ENCODE measurements at regions of chr17 and their contacts with region 1.

Region 1: GRCh38 chr17:19248928-19249574 is 11.9 kb downstream of the EPN2 start:
- DNase-seq: peak; percentile 42
- H3K4me3 ChIP-seq: no peak overlapping the region
- CTCF ChIP-seq: no peak

Region 2: DNA sequence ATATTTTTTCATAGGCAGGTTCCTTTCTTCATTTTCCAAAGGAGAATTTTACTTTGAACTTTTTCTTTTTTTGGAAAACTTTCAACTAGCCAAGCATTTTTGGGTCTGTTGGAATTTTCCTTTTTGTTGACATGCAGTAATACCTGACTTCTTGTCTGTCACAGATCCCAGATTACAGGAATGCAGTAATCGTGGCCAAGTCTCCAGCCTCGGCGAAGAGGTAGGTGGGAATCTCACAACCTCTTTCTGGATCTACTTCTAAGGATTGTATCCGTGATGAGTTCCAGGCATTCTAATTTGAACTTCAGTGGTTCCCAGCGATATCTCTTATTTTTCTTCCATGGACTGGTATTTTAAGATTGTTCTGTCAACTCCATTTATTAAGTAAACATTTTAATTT is 359.4 kb before region 1 on chr17:
- CTCF ChIA-PET with region 1: no interaction called
- POLR2A ChIA-PET with region 1: no interaction called
- DNase-seq: no peak
- H3K4me3 ChIP-seq: no peak overlapping the region
- CTCF ChIP-seq: no peak

Region 3: GRCh38 chr17:19237389-19238166 is 11.5 kb before region 1 on chr17:
- CTCF ChIA-PET with region 1: interaction called, 38 read pairs
- POLR2A ChIA-PET with region 1: interaction called, 3 read pairs
- DNase-seq: no peak
- H3K4me3 ChIP-seq: peak overlapping the region; percentile 92
- CTCF ChIP-seq: no peak

Region 4: DNA sequence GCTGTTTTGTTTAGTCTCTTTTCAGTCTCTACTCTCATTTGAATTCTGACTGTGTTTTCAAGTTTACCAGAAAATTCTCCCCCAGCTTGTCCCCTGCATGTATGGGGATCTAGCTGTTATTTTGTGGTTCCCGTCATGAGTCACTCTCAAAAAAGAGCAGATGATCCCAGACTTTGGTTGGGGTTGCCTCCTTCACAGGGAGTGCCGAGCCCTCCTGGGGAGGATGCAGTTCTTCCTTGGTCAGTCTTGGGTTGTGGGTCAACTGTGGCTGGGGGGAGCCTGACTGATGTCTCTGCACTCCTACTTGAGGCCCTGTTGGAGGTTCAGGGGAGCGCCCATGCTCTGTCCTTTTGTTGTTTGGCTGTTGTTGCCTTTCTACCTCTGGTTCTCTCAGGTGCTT is 25.8 kb after region 1 on chr17:
- CTCF ChIA-PET with region 1: no interaction called
- POLR2A ChIA-PET with region 1: no interaction called
- DNase-seq: no peak
- H3K4me3 ChIP-seq: no peak overlapping the region
- CTCF ChIP-seq: no peak